Sigmoid colon (tissue), 7 donors: ENCODE measurements at regions of chr5 and their contacts with region 1.

Region 1: GRCh38 chr5:123359454-123360200 is 63.6 kb downstream of the CEP120 start:
- DNase-seq: no peak
- H3K4me3 ChIP-seq: no peak overlapping the region
- H3K27ac ChIP-seq: peak overlapping the region in 3 of 4 donors; percentile 24 to 62 (median 54)
- H3K4me1 ChIP-seq: peaks cover 0 to 64% (median 35%) of the 10 kb centered on the region in 4 donors
- H3K27me3 ChIP-seq: no peaks in the 10 kb centered on the region
- CTCF ChIP-seq: no peak
- EP300 ChIP-seq: peak in 1 of 4 donors; percentile 2
- POLR2A ChIP-seq: no peak

Region 2: DNA sequence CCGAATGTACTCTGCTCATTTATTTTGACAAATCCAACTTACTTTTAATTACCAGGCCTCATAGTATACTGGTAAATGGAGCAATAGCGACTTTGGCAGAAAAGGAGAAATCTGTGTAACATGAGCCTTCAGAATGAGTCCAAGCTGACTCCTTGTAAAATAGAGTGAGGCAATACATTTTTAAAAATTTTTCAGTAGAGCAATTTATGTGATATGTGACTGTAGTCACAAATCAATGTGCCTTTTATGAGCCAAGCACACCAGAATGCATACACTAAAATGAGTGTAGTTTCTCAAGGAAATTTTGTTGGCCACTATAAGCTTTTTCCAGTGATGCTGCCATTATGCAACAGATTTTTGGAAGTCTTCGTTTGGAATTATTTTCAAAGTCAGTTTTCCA is 973.8 kb before region 1 on chr5:
- intact Hi-C with region 1: loop called (anchors 5 kb)
- DNase-seq: no peak
- H3K4me3 ChIP-seq: no peak overlapping the region
- H3K27ac ChIP-seq: peak overlapping the region in 3 of 4 donors; percentile 47 to 70 (median 67)
- H3K4me1 ChIP-seq: peaks cover 0 to 32% (median 25%) of the 10 kb centered on the region in 4 donors
- H3K27me3 ChIP-seq: no peaks in the 10 kb centered on the region
- CTCF ChIP-seq: no peak
- EP300 ChIP-seq: peak in 3 of 4 donors; percentile 16 to 58 (median 26)
- POLR2A ChIP-seq: no peak

Region 3: GRCh38 chr5:123157791-123158581 is 201.6 kb before region 1 on chr5:
- intact Hi-C with region 1: loop called (anchors 5 kb)
- DNase-seq: no peak
- H3K4me3 ChIP-seq: peak overlapping the region in 1 of 4 donors; percentile 4
- H3K27ac ChIP-seq: peak overlapping the region; percentile 16 to 84 (median 80)
- H3K4me1 ChIP-seq: peaks cover 3 to 51% (median 43%) of the 10 kb centered on the region in 4 donors
- H3K27me3 ChIP-seq: no peaks in the 10 kb centered on the region
- CTCF ChIP-seq: no peak
- EP300 ChIP-seq: no peak
- POLR2A ChIP-seq: no peak

Region 4: GRCh38 chr5:123294544-123294943 is 65.1 kb before region 1 on chr5:
- intact Hi-C with region 1: loop called (anchors 5 kb)
- DNase-seq: no peak
- H3K4me3 ChIP-seq: no peak overlapping the region
- H3K27ac ChIP-seq: no peak overlapping the region
- H3K4me1 ChIP-seq: peaks cover 0 to 10% (median 3%) of the 10 kb centered on the region in 4 donors
- H3K27me3 ChIP-seq: no peaks in the 10 kb centered on the region
- CTCF ChIP-seq: no peak
- EP300 ChIP-seq: no peak
- POLR2A ChIP-seq: no peak

Region 5: DNA sequence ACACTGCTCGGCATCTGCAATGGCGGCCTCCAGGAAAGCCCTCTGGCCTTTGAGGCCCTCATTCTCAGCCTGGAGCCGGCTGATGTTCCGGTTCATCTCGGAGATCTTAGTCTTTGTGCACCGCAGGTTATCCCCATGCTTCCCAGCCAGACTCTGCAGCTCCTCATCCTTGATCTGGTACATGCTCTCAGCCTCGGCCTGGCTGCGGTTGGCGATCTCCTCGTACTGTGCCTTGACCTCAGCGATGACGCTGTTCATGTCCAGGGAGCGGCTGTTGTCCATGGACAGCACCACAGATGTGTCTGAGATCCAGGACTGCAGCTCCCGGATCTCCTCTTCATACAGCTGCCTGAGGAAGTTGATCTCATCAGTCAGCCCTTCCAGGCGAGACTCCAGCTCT is 41.7 kb after region 1 on chr5:
- intact Hi-C with region 1: no loop called
- DNase-seq: no peak
- H3K4me3 ChIP-seq: no peak overlapping the region
- H3K27ac ChIP-seq: no peak overlapping the region
- H3K4me1 ChIP-seq: no peaks in the 10 kb centered on the region
- H3K27me3 ChIP-seq: no peaks in the 10 kb centered on the region
- CTCF ChIP-seq: no peak
- EP300 ChIP-seq: no peak
- POLR2A ChIP-seq: no peak

Region 6: DNA sequence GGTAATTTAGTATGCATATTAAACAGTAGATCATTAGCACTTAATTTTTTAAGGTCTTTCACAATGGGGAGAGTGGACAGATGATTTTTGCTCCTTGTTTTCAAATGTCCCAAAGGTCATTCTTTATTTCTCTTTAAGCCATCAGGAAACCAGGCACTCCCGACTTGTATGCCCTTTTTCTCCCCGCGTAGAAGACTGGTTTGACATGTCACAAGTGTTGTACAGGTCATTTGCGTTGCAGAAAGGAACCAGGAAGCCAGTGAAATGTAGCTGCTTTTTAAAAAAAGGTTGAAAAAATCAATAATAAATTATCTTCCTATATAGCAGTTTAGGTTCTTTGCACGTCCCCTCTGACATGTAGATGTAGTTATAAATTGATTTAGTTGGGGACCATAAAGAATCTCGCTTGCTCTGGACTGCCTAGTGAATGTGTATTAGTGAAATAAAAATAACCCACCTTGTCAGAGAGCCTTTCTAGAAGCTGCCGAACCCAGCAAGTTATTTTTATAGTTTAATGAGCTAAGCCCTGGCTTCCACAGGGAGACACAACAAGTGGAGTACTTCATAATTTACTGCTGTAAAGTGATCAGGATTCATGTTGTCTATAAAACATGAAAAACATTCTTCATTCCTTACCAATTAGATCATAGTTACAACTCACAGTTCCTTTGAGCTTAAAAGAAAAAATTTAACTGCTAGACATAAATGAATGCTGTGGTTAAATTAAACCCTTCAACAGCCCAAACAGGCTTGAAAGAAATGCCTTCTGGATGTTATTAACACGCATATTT is 556.9 kb after region 1 on chr5:
- intact Hi-C with region 1: no loop called
- DNase-seq: no peak
- H3K4me3 ChIP-seq: no peak overlapping the region
- H3K27ac ChIP-seq: peak overlapping the region in 3 of 4 donors; percentile 10 to 72 (median 46)
- H3K4me1 ChIP-seq: peaks cover 0 to 18% (median 14%) of the 10 kb centered on the region in 4 donors
- H3K27me3 ChIP-seq: no peaks in the 10 kb centered on the region
- CTCF ChIP-seq: no peak
- EP300 ChIP-seq: peak in 1 of 4 donors; percentile 33
- POLR2A ChIP-seq: no peak

Region 7: GRCh38 chr5:124317476-124317875 is 957.8 kb after region 1 on chr5:
- intact Hi-C with region 1: no loop called
- DNase-seq: no peak
- H3K4me3 ChIP-seq: no peak overlapping the region
- H3K27ac ChIP-seq: no peak overlapping the region
- H3K4me1 ChIP-seq: no peaks in the 10 kb centered on the region
- H3K27me3 ChIP-seq: no peaks in the 10 kb centered on the region
- CTCF ChIP-seq: no peak
- EP300 ChIP-seq: no peak
- POLR2A ChIP-seq: no peak